GM12878 (cell line): ENCODE measurements at regions of chr4 and their contacts with region 1.

Region 1: GRCh38 chr4:159206427-159206871 is 103.6 kb downstream of the RAPGEF2 start:
- DNase-seq: peak; percentile 83
- ATAC-seq: peak; percentile 84
- H3K4me3 ChIP-seq: no peak overlapping the region
- H3K27ac ChIP-seq: peak overlapping the region; percentile 60
- H3K4me1 ChIP-seq: peaks cover 27% of the 10 kb centered on the region
- H3K27me3 ChIP-seq: no peaks in the 10 kb centered on the region
- CTCF ChIP-seq: no peak
- EP300 ChIP-seq: no peak
- POLR2A ChIP-seq: no peak
- RAD21 ChIP-seq: no peak

Region 2: DNA sequence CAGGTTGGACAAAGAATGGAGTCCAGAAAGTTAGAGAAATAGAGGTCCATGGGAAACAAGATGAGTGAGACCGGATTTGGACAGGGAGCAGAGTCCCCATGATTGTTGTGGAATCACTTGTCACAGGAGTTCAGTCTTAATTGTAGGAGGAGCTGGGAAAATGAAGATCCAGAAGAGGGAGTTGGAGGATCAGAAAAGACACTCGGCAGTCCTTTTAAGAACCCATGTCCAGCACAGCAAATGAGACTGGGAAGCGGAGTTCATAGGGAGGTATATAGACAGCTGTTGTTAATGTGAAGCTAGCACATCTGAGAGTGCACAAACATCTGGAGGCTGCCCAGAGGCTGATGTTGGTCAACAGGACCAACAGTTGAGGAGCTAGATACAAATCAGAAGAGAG is 796.2 kb before region 1 on chr4:
- CTCF ChIA-PET with region 1: no interaction called
- POLR2A ChIA-PET with region 1: no interaction called
- RAD21 ChIA-PET with region 1: no interaction called
- SMC1A ChIA-PET with region 1: no interaction called
- in situ Hi-C with region 1: no loop called
- intact Hi-C with region 1: loop called (anchors 10 kb)
- DNase-seq: no peak
- ATAC-seq: no peak
- H3K4me3 ChIP-seq: no peak overlapping the region
- H3K27ac ChIP-seq: no peak overlapping the region
- H3K4me1 ChIP-seq: no peaks in the 10 kb centered on the region
- H3K27me3 ChIP-seq: no peaks in the 10 kb centered on the region
- CTCF ChIP-seq: no peak
- EP300 ChIP-seq: no peak
- POLR2A ChIP-seq: no peak
- RAD21 ChIP-seq: peak; percentile 12; the same call in 1 of the 2 replicates

Region 3: GRCh38 chr4:158671915-158672806 is 534.3 kb before region 1 on chr4 and contains the start of gene ETFDH:
- CTCF ChIA-PET with region 1: no interaction called
- POLR2A ChIA-PET with region 1: no interaction called
- RAD21 ChIA-PET with region 1: no interaction called
- SMC1A ChIA-PET with region 1: no interaction called
- in situ Hi-C with region 1: no loop called
- intact Hi-C with region 1: loop called (anchors 2 kb)
- DNase-seq: peak; percentile 99
- ATAC-seq: peak; percentile 88
- H3K4me3 ChIP-seq: peak within 1 kb of the TSS; percentile 89
- H3K27ac ChIP-seq: peak within 1 kb of the TSS; percentile 85
- H3K4me1 ChIP-seq: no peaks in the 10 kb centered on the region
- H3K27me3 ChIP-seq: no peaks in the 10 kb centered on the region
- CTCF ChIP-seq: peak; percentile 63 to 82 (median 71)
- EP300 ChIP-seq: no peak
- POLR2A ChIP-seq: peak; percentile 89
- RAD21 ChIP-seq: no peak
- polyA plus RNA-seq, gene ETFDH: 10.9 to 17.9 TPM

Region 4: GRCh38 chr4:158729716-158730559 is 476.5 kb before region 1 on chr4:
- CTCF ChIA-PET with region 1: interaction called, 4 read pairs
- POLR2A ChIA-PET with region 1: no interaction called
- RAD21 ChIA-PET with region 1: no interaction called
- SMC1A ChIA-PET with region 1: no interaction called
- in situ Hi-C with region 1: loop called (anchors 5 kb)
- intact Hi-C with region 1: loop called (anchors 2 kb)
- DNase-seq: peak; percentile 44
- ATAC-seq: peak; percentile 97
- H3K4me3 ChIP-seq: no peak overlapping the region
- H3K27ac ChIP-seq: no peak overlapping the region
- H3K4me1 ChIP-seq: no peaks in the 10 kb centered on the region
- H3K27me3 ChIP-seq: peaks cover 0 to 2% of the 10 kb centered on the region in 2 experiments; a peak in 1 of 4 replicates
- CTCF ChIP-seq: peak; percentile 81 to 97 (median 85)
- EP300 ChIP-seq: no peak
- POLR2A ChIP-seq: no peak
- RAD21 ChIP-seq: peak; percentile 85

Region 5: DNA sequence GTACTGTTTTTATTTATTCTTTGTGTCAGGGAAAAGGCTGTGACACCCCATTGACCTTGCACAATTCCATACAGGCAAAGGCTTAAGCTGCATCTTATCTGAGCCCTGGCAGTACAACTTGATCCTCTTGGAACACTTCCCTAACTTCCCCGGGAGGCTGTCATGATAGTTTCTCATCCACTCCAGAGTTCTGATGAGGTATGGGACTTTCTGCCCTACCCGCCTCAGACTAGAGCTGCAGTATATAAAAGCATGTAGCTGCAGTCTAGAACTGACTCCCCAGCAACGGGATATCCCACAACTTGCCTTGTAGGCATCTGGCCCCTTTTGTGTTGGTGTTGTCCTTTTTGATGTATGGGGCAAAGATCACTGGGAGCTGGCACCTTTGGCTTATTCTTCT is 364.9 kb before region 1 on chr4:
- CTCF ChIA-PET with region 1: no interaction called
- POLR2A ChIA-PET with region 1: no interaction called
- RAD21 ChIA-PET with region 1: no interaction called
- SMC1A ChIA-PET with region 1: no interaction called
- in situ Hi-C with region 1: no loop called
- intact Hi-C with region 1: no loop called
- DNase-seq: no peak
- ATAC-seq: no peak
- H3K4me3 ChIP-seq: no peak overlapping the region
- H3K27ac ChIP-seq: no peak overlapping the region
- H3K4me1 ChIP-seq: no peaks in the 10 kb centered on the region
- H3K27me3 ChIP-seq: no peaks in the 10 kb centered on the region
- CTCF ChIP-seq: no peak
- EP300 ChIP-seq: no peak
- POLR2A ChIP-seq: no peak
- RAD21 ChIP-seq: no peak

Region 6: DNA sequence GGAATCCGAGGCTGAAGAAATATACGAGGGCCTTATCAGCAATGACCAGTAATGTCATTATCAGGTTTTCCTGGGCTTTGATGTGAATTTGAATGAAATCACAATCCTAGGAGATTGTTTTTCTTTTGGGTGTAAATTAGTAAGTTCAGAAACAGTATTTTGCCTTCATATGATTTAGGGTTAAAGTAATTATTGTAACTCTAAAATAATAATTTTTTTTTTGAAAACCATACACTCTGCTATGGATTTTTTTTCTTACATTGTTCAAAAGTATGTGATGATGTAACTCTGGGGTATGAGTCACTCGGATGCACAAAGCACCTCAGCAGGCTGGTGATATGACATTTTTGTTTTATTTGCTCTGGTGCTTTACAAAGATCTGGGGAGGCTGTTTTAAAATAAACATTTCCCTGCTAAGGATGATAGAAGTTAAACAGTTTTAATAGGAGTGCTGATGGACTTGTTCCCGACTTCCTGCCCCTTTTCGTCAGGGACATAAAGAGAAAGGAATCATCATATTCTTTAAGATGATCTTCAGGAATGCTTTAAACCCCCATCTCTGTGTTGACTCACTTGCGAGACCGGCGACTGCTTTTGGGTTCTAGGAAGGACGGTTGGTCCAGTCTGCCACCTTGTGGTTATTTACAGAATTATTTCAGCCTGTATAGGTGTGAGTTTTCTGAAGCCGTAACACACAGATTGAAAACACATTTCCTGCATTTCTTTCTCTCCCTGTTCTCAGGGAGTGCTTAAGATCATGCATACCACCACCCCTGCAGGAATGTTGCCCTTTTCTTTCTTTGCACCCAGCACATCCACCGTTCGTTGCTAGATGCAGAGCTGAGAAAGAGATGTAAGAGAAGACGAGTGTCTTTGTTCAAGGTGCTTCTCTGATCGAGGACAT is 31.1 kb before region 1 on chr4:
- CTCF ChIA-PET with region 1: interaction called, 25 read pairs
- POLR2A ChIA-PET with region 1: interaction called, 3 read pairs
- RAD21 ChIA-PET with region 1: interaction called, 12 read pairs
- SMC1A ChIA-PET with region 1: interaction called, 30 read pairs
- in situ Hi-C with region 1: no loop called
- intact Hi-C with region 1: loop called (anchors 1 kb)
- DNase-seq: peak; percentile 73
- ATAC-seq: peak; percentile 82
- H3K4me3 ChIP-seq: peak overlapping the region; percentile 60
- H3K27ac ChIP-seq: no peak overlapping the region; the same call in 1 of the 2 replicates
- H3K4me1 ChIP-seq: peaks cover 58% of the 10 kb centered on the region
- H3K27me3 ChIP-seq: no peaks in the 10 kb centered on the region
- CTCF ChIP-seq: peak; percentile 59 to 85 (median 75)
- EP300 ChIP-seq: no peak
- POLR2A ChIP-seq: no peak
- RAD21 ChIP-seq: peak; percentile 98

Region 7: GRCh38 chr4:159446266-159446976 is 240.0 kb after region 1 on chr4:
- CTCF ChIA-PET with region 1: no interaction called
- POLR2A ChIA-PET with region 1: no interaction called
- RAD21 ChIA-PET with region 1: no interaction called
- SMC1A ChIA-PET with region 1: no interaction called
- in situ Hi-C with region 1: loop called (anchors 10 kb)
- intact Hi-C with region 1: loop called (anchors 5 kb)
- DNase-seq: peak; percentile 26
- ATAC-seq: peak; percentile 100
- H3K4me3 ChIP-seq: no peak overlapping the region
- H3K27ac ChIP-seq: no peak overlapping the region
- H3K4me1 ChIP-seq: no peaks in the 10 kb centered on the region
- H3K27me3 ChIP-seq: no peaks in the 10 kb centered on the region
- CTCF ChIP-seq: peak; percentile 76 to 90 (median 86)
- EP300 ChIP-seq: no peak
- POLR2A ChIP-seq: no peak
- RAD21 ChIP-seq: peak; percentile 95